Cardiac septum (tissue), 1 donor: ENCODE measurements at regions of chr3 and their contacts with region 1.

Region 1: DNA sequence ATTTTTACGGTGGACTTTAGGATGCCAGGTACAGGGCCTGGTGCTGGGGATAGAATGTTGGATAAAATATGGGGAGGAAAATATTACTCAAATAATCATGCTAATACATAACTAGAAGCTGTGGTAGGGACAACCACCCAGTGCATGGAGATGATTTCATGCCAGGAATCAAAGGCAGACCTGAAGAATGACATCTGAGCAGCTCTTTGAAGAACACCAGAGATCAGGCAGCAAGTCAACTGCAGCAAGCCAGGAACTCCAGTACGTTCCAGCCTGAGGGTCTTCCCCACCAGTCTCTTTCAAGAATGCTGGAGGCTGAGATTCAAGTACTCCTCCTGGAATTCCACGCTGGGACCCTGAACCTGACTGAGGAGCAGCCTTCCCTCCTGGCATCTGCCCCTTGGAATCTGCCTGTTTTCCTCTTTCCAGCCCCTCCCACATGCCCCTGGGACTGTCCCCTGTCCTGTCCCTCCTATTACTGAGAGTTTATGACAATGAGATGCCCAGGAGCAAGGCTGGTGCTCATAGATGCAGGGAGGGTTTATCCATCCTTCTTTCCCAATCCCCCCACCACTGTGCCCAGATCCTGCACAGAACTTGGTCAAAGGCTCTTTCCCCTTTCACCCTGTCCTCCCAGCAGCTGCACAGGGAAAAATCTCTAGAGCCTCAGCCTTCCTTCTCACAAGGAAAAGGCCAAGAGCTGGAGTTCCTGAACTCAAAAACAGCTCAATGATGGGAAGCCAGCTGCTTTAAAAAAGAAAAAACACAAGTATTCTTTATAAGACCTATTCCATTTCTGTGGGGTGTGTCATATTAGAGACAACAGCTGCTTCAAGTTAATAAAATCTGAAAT is 68.0 kb downstream of the PDZRN3 start:
- DNase-seq: no peak

Region 2: DNA sequence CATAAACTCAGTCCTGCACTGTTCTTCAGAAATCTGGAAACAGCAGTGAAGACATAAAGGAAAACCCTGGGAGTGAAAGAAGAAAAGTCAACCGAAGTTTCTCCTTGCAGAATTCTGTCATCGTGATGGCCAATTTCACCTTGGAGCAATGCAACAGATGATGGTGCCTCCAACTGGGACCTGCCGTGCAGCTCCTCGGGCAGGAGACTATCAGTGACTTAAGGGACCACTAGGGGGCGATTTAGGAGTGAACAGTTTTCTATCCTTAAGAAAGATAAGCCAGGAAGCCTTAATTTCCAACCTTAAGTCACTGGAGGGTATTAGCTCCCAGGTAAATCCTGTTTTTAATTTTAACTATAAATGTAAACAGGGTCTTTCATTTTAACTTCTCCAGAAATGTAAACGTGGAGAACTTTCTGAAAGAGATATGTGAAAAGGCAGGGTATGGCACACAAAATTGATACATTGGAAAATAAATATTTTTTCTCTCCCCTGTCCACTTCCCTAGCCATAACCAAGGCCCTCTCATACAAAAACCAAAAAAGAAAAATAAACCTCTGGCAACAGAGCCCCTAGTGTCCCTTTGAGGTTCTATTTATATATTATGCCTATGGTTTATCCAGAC is 48.3 kb before region 1 on chr3:
- intact Hi-C with region 1: loop called (anchors 5 kb)
- DNase-seq: no peak